Aorta (tissue), 5 donors: ENCODE measurements at regions of chr15 and their contacts with region 1.

Region 1: DNA sequence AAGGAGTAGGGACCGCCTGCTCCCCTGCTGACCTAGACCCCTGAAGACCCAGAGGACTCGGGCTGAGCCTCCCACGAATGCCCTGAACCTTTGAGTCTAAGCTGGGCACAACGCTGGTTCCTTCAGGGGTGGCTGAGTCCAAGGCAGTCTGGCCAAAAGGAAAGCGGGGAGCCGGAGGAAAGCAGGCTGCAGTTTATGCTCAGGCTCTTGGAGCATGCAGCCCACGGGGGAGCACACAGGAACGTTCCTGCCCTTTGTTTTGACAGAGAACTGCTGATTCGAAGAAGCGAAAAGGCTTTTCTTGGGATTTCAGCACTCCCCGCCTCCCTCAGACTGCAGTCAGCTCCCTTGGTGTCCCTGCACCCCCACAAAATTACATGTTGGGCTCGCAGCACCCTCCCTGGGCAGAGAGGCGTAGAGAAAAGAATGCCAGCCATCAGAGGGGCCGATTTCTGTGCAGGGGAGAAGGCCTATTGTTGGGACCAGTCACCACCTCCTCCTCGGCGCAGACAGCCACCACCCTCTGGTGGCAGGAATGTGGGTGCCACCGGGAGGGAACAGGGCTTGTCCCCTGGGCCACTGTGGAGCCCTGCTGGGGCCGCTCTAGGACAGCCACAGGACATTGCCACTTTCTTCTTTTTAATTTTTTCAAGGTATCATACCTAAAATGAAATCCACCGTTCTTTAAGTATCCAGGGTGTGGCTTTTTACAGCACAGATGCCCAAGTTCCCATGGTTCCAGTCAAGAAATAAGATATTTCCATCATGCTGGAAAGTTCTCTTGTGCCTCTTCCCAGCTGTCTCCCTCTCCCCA is 72.2 kb downstream of the SMAD6 start:
- DNase-seq: peak; percentile 89 to 97
- ATAC-seq: peak; percentile 92
- H3K4me3 ChIP-seq: no peak overlapping the region
- H3K27ac ChIP-seq: peak overlapping the region; percentile 52 to 58
- H3K4me1 ChIP-seq: no peaks in the 10 kb centered on the region
- H3K27me3 ChIP-seq: no peaks in the 10 kb centered on the region

Region 2: GRCh38 chr15:66603301-66604179 is 170.7 kb before region 1 on chr15:
- intact Hi-C with region 1: loop called in 1 of 2 experiments (anchors 5 kb)
- DNase-seq: peak; percentile 78 to 90
- ATAC-seq: peak; percentile 83
- H3K4me3 ChIP-seq: no peak overlapping the region
- H3K27ac ChIP-seq: no peak overlapping the region
- H3K4me1 ChIP-seq: no peaks in the 10 kb centered on the region
- H3K27me3 ChIP-seq: no peaks in the 10 kb centered on the region

Region 3: DNA sequence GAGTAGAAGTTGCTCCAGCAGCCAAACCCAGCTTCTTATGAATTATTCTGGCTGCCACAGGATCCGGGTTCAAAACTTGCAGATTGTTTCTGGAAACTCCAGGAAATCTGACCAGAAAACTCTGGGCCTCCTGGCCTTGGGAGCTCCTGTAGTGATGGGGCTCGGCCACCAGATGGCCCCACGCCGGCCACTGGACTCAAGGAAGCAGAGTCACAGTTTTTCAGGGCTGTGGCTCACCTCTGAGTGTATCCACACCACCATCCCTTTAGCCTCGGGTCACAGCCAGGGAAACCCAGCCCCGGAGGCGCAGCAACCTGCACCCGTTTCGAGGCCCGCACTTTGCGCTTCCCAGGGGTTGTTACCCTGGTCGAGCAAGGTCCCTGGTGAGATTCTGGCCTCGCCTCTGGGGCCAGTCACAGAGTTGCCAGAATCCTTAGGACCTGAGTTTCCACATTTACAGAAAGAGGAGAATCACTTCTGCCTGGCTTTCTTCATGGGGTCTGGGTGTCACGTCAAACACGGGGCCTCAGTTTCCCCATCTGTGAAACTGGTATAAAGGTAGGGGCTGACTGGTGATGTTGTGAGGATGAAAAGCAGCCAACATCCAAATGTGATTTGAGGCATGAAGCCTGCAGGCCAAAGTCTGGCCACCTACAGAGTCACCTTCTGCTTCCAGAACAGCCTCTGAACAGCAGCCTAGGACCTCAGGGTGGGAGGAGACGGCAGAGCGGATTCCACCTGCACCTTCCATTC is 154.9 kb before region 1 on chr15:
- intact Hi-C with region 1: loop called (anchors 5 kb)
- DNase-seq: peak; percentile 86 to 92
- ATAC-seq: peak; percentile 86
- H3K4me3 ChIP-seq: no peak overlapping the region
- H3K27ac ChIP-seq: no peak overlapping the region
- H3K4me1 ChIP-seq: no peaks in the 10 kb centered on the region
- H3K27me3 ChIP-seq: no peaks in the 10 kb centered on the region

Region 4: DNA sequence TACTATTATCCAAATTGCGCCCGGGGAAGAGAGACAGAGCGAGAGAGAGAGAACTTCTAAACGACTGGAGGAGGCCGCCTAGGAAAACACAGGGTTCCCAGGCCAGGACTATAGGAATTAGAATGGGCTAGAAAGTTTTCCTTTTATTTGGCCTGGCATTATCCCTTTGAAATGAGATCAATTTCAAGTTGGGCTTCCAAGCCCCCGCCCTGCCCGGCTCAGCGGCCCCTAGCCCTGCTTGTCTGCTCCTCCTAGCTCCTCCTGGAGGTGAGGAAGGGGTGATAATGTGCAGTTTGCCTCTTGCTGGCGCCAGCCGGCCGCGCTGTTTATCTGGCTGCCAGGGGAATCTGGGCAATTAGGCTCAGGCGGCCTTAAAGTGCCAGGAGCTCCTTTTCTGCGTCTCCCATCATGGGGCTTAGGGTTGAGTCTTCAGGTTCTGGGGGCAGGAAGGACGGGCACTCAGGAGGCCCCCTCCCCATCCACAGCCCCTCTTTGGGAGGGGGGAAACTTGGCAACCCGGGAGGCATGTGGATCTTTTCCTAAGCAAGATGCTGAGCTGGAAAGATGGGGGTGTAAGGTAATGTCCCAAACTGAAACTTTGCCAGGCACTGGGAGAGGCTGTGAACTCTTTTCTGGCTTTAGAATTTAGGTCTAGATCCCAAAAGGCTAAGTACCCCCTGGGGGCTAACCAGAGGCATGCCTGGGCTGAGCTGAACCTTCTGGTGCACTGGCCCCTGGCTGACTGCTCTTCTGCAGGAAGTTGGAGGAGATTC is 66.7 kb before region 1 on chr15:
- intact Hi-C with region 1: loop called (anchors 2 kb)
- DNase-seq: peak in 1 of 2 donors; percentile 70
- ATAC-seq: peak; percentile 27
- H3K4me3 ChIP-seq: peak overlapping the region in 1 of 2 donors; percentile 38
- H3K27ac ChIP-seq: peak overlapping the region in 1 of 2 donors; percentile 56
- H3K4me1 ChIP-seq: no peaks in the 10 kb centered on the region
- H3K27me3 ChIP-seq: no peaks in the 10 kb centered on the region

Region 5: GRCh38 chr15:66883322-66883911 is 109.2 kb after region 1 on chr15:
- intact Hi-C with region 1: no loop called
- DNase-seq: peak; percentile 95 to 96
- ATAC-seq: peak; percentile 90
- H3K4me3 ChIP-seq: no peak overlapping the region
- H3K27ac ChIP-seq: peak overlapping the region in 1 of 2 donors; percentile 75
- H3K4me1 ChIP-seq: no peaks in the 10 kb centered on the region
- H3K27me3 ChIP-seq: no peaks in the 10 kb centered on the region

Region 6: DNA sequence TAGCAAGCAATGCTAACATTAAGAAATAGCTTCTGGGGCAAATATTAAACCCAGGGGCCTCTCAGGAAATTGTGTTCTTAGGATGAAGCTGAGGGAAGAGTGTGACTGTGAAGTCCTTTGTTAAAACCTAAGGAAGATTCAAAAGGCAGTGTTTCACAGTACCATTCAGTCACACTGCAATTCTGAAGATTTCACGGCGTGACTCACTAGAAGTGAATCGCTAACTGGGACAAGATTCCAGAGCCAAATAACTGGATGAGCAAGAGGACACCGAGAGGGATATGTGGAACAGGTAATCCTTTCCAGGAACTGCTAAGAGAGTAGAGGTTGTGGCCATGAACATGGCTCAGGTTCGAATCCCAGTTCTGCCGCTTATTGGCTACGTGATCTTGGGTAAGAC is 229.4 kb after region 1 on chr15:
- intact Hi-C with region 1: no loop called
- DNase-seq: no peak
- ATAC-seq: no peak
- H3K4me3 ChIP-seq: no peak overlapping the region
- H3K27ac ChIP-seq: no peak overlapping the region
- H3K4me1 ChIP-seq: no peaks in the 10 kb centered on the region
- H3K27me3 ChIP-seq: no peaks in the 10 kb centered on the region

Region 7: DNA sequence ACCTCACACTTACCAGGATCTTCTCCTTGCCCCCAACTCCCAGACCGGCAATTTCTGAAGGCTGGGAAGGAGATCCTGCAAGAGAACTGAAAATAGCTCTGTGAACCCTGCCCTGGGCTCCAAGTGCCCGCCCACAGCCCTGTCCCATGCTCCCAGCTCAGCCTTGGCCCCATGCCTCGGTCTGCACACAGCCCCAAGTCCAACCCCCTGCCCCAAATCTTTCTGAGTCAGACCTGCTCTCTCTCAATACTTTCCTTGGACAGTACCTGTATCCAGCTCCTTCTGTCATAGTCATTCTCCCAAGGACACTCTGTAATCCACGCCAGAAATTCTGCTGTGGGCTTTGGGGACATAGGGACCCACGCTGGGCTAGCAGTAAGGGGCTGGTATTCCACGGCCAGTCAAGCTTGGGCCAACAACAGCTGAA is 284.9 kb after region 1 on chr15:
- intact Hi-C with region 1: no loop called
- DNase-seq: peak; percentile 81 to 85
- ATAC-seq: peak; percentile 85
- H3K4me3 ChIP-seq: no peak overlapping the region
- H3K27ac ChIP-seq: peak overlapping the region in 1 of 2 donors; percentile 52
- H3K4me1 ChIP-seq: peaks cover 0 to 2% of the 10 kb centered on the region in 2 donors
- H3K27me3 ChIP-seq: no peaks in the 10 kb centered on the region